Dendritic cell treated with granulocyte-macrophage colony-stimulating factor and Interleukin-4, amounts not matched to agents 40 ng/mL and 50 ng/mL, for 4 days (primary cell): ENCODE measurements at regions of chr11 and their contacts with region 1.

Region 1: DNA sequence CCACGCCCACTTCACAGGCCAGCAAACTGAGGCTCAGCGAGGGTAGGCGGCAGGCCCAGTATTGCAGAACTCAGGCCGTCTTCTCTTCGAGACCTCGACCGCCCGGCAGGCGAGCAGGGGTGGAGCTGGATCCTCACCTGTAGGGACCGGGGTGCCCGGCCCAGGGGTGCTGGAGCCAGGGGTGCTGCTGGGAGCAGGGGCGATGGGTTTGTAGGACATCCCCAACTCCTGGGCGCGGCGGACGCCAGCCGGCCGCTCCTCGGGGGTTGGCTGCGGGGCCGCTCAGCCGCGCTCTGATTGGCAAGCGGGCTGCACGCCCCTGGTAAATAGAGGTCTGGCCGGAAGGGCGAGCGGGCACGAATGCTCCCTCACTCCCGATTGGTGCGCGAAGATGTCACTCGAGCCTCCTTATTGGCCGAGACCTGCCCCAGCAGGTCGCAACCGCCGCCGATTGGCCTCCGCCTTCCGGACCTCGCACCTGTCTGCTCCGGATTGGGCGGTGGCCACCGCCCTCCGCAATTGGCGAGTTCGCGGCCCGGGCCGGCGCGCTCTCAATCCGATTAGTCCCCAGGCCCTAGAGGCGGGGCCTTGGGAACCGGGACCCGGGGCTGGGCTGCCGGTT is at the start of gene CDK2AP2:
- H3K4me3 Mint-ChIP-seq: peak within 1 kb of the TSS; percentile 97
- H3K27ac Mint-ChIP-seq: peak within 1 kb of the TSS; percentile 98
- H3K4me1 Mint-ChIP-seq: peaks cover 50% of the 10 kb centered on the region
- H3K27me3 Mint-ChIP-seq: peaks cover 24% of the 10 kb centered on the region

Region 2: DNA sequence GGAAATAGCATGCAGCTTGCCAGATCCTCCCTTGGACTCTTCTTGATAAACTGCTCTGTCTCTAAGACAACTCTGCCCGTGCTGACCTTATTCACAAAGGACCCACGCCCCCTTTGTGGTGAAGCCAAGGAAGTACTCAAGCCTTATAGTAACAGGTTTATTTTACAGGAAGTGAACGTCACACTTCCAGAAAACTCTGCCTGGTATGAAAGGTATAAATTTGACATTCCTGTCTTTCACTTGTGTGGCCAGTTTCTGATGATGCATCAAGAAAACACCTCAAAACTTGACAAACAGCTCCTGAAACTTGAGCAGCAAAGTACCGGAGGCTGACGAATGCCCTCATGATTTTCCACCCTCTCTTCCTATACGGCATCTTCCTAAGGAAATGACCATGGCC is 1053.7 kb before region 1 on chr11:
- intact Hi-C with region 1: no loop called
- H3K4me3 Mint-ChIP-seq: no peak overlapping the region
- H3K27ac Mint-ChIP-seq: no peak overlapping the region
- H3K4me1 Mint-ChIP-seq: peaks cover 30% of the 10 kb centered on the region
- H3K27me3 Mint-ChIP-seq: peaks cover 14% of the 10 kb centered on the region

Region 3: GRCh38 chr11:67288452-67289225 is 219.3 kb before region 1 on chr11:
- intact Hi-C with region 1: loop called (anchors 10 kb)
- H3K4me3 Mint-ChIP-seq: peak overlapping the region; percentile 79
- H3K27ac Mint-ChIP-seq: peak overlapping the region; percentile 98
- H3K4me1 Mint-ChIP-seq: peaks cover 86% of the 10 kb centered on the region
- H3K27me3 Mint-ChIP-seq: no peaks in the 10 kb centered on the region

Region 4: GRCh38 chr11:67353317-67354074 is 154.5 kb before region 1 on chr11 and contains the start of gene POLD4:
- intact Hi-C with region 1: loop called (anchors 2 kb)
- H3K4me3 Mint-ChIP-seq: peak within 1 kb of the TSS; percentile 97
- H3K27ac Mint-ChIP-seq: peak within 1 kb of the TSS; percentile 99
- H3K4me1 Mint-ChIP-seq: peaks cover 77% of the 10 kb centered on the region
- H3K27me3 Mint-ChIP-seq: no peaks in the 10 kb centered on the region

Region 5: GRCh38 chr11:67401495-67402191 is 106.3 kb before region 1 on chr11 and contains the start of gene PPP1CA:
- intact Hi-C with region 1: loop called (anchors 1 kb)
- H3K4me3 Mint-ChIP-seq: peak within 1 kb of the TSS; percentile 80
- H3K27ac Mint-ChIP-seq: peak within 1 kb of the TSS; percentile 82
- H3K4me1 Mint-ChIP-seq: peaks cover 87% of the 10 kb centered on the region
- H3K27me3 Mint-ChIP-seq: no peaks in the 10 kb centered on the region

Region 6: DNA sequence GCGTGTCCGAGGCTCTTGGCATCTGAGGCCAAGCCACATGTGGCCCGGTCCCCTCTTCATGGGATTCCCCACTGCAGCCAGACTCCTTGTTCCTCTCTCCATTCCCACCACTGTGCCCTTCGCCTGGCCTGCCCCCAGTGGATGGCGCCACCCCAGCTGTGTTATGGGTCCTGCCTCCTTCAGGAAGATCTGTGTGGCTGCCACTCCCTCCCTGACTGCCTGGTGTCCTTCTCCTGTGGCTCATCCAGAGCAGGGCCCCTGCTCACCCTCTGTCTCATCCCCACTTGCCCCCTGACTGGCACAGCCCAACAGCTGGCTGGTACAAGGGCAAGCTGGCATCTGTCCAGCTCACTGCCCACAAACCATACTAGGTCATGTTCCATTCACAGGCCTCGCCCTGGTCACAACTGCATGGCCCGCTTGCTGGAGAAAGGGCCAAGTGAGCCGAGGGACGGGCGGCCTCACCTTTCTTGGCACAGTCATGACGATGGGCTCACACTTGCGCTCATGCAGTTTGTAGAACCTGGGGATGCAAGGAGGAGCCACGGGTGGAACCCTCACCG is 68.6 kb before region 1 on chr11:
- intact Hi-C with region 1: loop called (anchors 5 kb)
- H3K4me3 Mint-ChIP-seq: no peak overlapping the region
- H3K27ac Mint-ChIP-seq: peak overlapping the region; percentile 60
- H3K4me1 Mint-ChIP-seq: peaks cover 72% of the 10 kb centered on the region
- H3K27me3 Mint-ChIP-seq: no peaks in the 10 kb centered on the region

Region 7: GRCh38 chr11:67468835-67469811 is 38.9 kb before region 1 on chr11 and contains the start of gene TMEM134:
- intact Hi-C with region 1: loop called (anchors 5 kb)
- H3K4me3 Mint-ChIP-seq: peak within 1 kb of the TSS; percentile 87
- H3K27ac Mint-ChIP-seq: peak within 1 kb of the TSS; percentile 82
- H3K4me1 Mint-ChIP-seq: peaks cover 63% of the 10 kb centered on the region
- H3K27me3 Mint-ChIP-seq: peaks cover 10% of the 10 kb centered on the region

Region 8: GRCh38 chr11:67482825-67483798 is 24.9 kb before region 1 on chr11 and contains the start of gene AIP:
- intact Hi-C with region 1: loop called (anchors 1 kb)
- H3K4me3 Mint-ChIP-seq: peak within 1 kb of the TSS; percentile 91
- H3K27ac Mint-ChIP-seq: peak within 1 kb of the TSS; percentile 96
- H3K4me1 Mint-ChIP-seq: peaks cover 47% of the 10 kb centered on the region
- H3K27me3 Mint-ChIP-seq: peaks cover 3% of the 10 kb centered on the region

Region 9: DNA sequence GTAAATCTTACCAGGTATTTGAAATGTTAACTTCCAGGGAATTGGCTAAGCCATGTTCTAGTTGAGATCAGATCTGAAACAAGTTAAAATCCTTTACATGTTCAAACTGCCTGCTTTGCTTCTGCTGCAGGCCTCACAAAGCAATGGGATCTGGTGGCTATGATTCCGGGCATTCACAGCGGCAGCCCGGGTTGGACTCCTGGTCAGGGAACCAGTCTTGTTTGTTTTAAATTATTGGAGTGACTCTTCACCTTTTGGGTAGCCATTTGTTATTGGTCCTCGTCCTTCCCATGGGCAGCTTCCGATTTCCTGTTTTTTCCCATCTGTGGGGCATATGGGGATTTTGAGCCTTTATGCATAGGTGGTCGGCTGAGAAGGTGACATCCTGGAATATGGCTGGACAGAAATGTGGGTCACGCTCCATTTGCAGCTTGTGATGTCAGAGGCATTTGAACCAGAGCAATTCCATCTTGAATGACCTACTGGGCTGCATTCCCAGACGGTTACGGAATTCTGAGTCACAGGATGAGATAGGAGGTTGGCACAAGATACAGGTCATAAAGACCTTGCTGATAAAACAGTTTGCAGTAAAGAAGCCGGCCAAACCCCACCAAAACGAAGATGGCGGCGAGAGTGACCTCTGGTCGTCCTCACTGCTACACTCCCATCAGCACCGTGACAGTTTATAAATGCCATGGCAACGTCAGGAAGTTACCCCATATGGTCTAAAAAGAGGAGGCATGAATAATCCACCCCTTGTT is 55.6 kb after region 1 on chr11:
- intact Hi-C with region 1: no loop called
- H3K4me3 Mint-ChIP-seq: no peak overlapping the region
- H3K27ac Mint-ChIP-seq: no peak overlapping the region
- H3K4me1 Mint-ChIP-seq: peaks cover 5% of the 10 kb centered on the region
- H3K27me3 Mint-ChIP-seq: peaks cover 38% of the 10 kb centered on the region